Posterior vena cava (tissue), 2 donors: ENCODE measurements at regions of chr19 and their contacts with region 1.

Region 1: GRCh38 chr19:31154021-31154420 is 195.2 kb downstream of the TSHZ3 start:
- DNase-seq: no peak

Region 2: DNA sequence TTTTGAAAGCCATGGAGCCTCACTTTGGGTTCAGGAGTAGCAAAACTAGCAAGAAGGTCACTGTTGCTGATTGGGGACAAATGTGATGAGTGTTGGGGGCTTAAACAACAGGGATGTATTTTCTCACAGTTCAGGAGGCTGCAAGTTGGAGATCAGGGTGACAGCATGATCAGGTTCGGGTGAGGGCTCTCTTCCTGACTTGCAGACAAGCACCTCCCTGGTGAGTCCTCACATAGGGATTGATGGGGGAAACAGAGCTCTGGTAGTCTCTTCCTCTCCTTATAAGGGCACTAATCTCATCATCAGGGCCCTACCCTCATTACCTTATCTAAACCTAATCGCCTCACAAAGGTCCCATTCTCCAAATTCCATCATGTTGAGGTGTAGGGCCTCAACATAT is 16.0 kb after region 1 on chr19:
- intact Hi-C with region 1: loop called in 1 of 2 experiments (anchors 1 kb)
- DNase-seq: no peak

Region 3: GRCh38 chr19:31185272-31185671 is 31.3 kb after region 1 on chr19:
- intact Hi-C with region 1: no loop called
- DNase-seq: no peak